Ascending aorta (tissue), 2 donors: ENCODE measurements at regions of chr2 and their contacts with region 1.

Region 1: DNA sequence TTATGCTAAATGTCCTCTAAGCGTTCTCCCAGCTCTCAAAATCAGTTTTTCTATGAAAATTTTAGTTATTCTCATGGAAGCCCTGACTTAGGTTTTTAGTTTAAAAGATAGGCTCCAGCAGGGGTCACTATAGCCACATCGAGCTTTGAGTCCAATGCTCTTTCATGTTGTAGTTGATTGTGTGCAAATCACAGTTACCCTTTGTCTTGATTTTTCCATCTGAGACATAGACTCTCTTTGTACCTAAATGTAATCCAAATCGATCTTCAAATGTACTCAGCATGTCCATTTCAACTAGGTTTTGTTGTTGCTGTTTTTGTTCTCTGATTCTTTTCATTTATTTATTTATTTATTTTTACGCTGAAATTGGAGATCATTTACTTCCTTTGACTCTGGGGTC is 26.4 kb upstream of the MSTN start:
- DNase-seq: peak in 1 of 2 donors; percentile 64
- H3K4me3 ChIP-seq: no peak overlapping the region
- H3K27ac ChIP-seq: no peak overlapping the region
- H3K4me1 ChIP-seq: no peaks in the 10 kb centered on the region
- H3K27me3 ChIP-seq: no peaks in the 10 kb centered on the region
- CTCF ChIP-seq: peak; percentile 21 to 80 (median 64)

Region 2: DNA sequence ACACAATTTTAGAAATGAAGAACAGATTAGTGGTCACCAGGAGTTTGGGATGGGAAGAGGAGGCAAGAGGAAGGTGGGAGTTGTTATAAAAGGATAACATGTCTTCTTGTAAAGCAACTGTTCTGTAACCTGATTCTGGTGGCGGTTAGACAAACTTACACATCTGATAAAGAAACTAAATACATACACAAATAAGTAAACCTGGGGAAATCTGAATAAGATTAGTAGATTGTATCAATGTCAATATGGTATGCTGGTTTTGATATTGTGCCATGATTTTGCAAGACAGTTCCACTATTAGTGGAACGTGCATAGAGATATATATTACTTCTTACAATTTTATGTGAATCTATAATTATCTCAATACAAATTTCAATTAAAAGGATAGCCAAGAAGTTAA is 122.4 kb before region 1 on chr2:
- intact Hi-C with region 1: no loop called
- DNase-seq: no peak
- H3K4me3 ChIP-seq: no peak overlapping the region
- H3K27ac ChIP-seq: no peak overlapping the region
- H3K4me1 ChIP-seq: no peaks in the 10 kb centered on the region
- H3K27me3 ChIP-seq: no peaks in the 10 kb centered on the region
- CTCF ChIP-seq: no peak

Region 3: GRCh38 chr2:190277234-190278112 is 188.6 kb after region 1 on chr2:
- intact Hi-C with region 1: loop called (anchors 2 kb)
- DNase-seq: no peak
- H3K4me3 ChIP-seq: no peak overlapping the region
- H3K27ac ChIP-seq: no peak overlapping the region
- H3K4me1 ChIP-seq: peaks cover 0 to 15% of the 10 kb centered on the region in 2 donors
- H3K27me3 ChIP-seq: no peaks in the 10 kb centered on the region
- CTCF ChIP-seq: peak in 2 of 3 experiments; percentile 43 to 59

Region 4: GRCh38 chr2:190376591-190377245 is 287.8 kb after region 1 on chr2:
- intact Hi-C with region 1: loop called (anchors 1 kb)
- DNase-seq: no peak
- H3K4me3 ChIP-seq: no peak overlapping the region
- H3K27ac ChIP-seq: no peak overlapping the region
- H3K4me1 ChIP-seq: peaks cover 0 to 5% of the 10 kb centered on the region in 2 donors
- H3K27me3 ChIP-seq: no peaks in the 10 kb centered on the region
- CTCF ChIP-seq: no peak

Region 5: DNA sequence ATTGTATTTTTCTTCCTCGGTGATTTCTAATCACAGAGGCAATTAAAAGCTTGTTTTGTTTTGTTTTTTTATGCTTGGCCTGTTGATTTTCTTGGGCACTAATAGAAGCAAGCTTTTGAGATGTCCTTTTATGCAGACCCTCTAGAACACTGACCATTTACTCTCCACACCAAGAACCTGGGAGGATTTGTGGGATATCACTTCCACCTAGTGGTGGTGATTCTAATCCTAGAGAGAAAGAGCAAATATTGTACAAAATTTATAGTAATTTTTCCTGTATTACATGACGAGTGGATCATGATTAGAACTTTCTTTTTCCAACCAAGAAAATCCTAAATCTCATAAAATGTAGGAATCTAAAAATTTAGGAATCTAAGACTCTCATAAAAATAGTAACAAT is 422.2 kb after region 1 on chr2:
- intact Hi-C with region 1: loop called (anchors 5 kb)
- DNase-seq: no peak
- H3K4me3 ChIP-seq: no peak overlapping the region
- H3K27ac ChIP-seq: no peak overlapping the region
- H3K4me1 ChIP-seq: no peaks in the 10 kb centered on the region
- H3K27me3 ChIP-seq: no peaks in the 10 kb centered on the region
- CTCF ChIP-seq: peak; percentile 19 to 49 (median 28)